Right cardiac atrium (tissue), 5 donors: ENCODE measurements at regions of chr19 and their contacts with region 1.

Region 1: DNA sequence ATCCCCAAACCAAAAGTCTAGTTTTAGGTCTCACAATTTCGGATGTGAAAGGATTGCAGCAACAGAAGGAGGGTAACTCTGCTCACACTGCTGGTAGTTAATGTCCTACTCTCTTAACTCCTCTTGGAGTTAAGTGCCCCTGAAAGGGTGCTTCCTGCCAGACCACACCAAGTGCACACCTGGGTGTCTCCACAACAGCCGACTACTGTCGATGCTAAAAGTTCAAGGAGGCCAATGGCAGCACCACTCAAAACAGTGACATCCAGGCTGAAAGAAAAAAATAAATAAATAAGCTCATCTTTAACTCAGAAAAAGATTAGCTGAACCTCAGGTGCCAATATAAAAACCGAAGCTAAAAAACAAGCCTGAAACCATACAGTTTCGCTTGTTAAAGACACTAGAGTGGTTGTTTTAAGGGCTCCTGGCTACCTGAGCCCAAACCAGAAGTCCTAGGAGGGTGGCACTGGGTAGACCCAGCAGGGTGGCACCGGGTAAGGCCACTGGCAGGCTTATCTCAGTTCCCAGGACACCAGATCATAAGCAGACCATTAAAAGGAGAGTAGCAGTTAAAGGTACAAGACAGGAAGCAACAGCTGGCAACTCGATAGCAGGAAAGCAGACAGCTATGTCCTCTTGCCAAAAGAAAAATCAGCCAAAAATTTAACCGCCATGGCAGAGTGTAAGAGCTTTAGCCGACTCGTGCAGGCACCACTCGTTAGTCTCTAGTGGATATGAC is 39.3 kb downstream of the BRD4 start:
- DNase-seq: no peak
- ATAC-seq: peak; percentile 22 to 29
- H3K4me3 ChIP-seq: no peak overlapping the region
- H3K27ac ChIP-seq: no peak overlapping the region
- H3K4me1 ChIP-seq: peaks cover 53% of the 10 kb centered on the region
- H3K27me3 ChIP-seq: no peaks in the 10 kb centered on the region

Region 2: GRCh38 chr19:15324791-15325519 is 31.9 kb after region 1 on chr19:
- intact Hi-C with region 1: loop called in 1 of 4 experiments (anchors 5 kb)
- DNase-seq: peak in 2 of 3 donors; percentile 33 to 59
- ATAC-seq: peak; percentile 48 to 62
- H3K4me3 ChIP-seq: no peak overlapping the region
- H3K27ac ChIP-seq: peak overlapping the region; percentile 18
- H3K4me1 ChIP-seq: peaks cover 33% of the 10 kb centered on the region
- H3K27me3 ChIP-seq: no peaks in the 10 kb centered on the region